AG04450 (cell line): ENCODE measurements at regions of chr20 and their contacts with region 1.

Region 1: DNA sequence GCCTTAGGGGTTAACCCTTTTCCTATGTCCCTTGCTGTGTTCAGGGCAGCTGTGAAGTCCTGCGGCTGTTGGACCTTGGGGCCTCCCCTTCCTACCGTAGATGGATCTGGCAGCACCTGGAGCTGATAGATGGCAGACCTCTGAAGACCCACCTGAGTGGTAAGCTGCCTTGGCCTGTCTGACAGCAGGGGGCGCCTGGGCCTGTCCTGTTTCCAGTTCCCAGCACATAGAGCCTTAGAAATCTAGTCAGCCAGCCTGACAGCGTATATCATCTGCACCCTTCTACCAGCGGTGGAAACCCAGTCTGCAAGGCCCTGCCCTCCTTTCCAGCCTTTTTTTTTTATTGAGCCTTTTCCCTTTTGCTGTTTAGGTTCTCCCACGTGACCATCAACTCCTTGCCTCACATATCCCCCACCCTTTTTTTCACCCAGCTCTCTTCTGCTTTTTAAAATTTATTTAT is 26.6 kb downstream of the CNBD2 start:
- DNase-seq: peak; percentile 57
- H3K4me3 ChIP-seq: no peak overlapping the region
- H3K27ac ChIP-seq: no peak overlapping the region
- H3K27me3 ChIP-seq: no peaks in the 10 kb centered on the region
- CTCF ChIP-seq: peak; percentile 99

Region 2: DNA sequence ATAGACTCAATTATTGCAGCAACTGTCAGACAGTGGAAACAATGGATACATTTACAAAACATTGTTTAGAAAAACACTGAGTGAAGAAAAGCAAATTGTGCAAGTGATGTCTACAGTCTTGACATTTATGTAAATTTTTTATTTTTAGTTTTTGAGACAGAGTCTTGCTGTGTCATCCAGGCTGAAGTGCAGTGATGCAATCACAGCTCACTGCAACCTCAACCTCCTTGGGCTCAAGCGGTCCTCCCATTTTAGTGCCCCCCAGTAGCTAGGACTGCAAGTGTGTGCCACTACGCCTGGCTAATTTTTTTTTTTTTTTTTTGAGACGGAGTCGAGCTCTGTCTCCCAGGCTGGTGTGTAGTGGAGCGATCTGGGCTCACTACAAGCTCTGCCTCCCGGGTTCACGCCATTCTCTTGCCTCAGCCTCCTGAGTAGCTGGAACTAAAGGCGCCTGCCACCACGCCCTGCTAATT is 16.9 kb before region 1 on chr20:
- CTCF ChIA-PET with region 1: interaction called, 112 read pairs
- POLR2A ChIA-PET with region 1: no interaction called
- DNase-seq: no peak
- H3K4me3 ChIP-seq: no peak overlapping the region
- H3K27ac ChIP-seq: no peak overlapping the region
- H3K27me3 ChIP-seq: peaks cover 15% of the 10 kb centered on the region
- CTCF ChIP-seq: no peak

Region 3: DNA sequence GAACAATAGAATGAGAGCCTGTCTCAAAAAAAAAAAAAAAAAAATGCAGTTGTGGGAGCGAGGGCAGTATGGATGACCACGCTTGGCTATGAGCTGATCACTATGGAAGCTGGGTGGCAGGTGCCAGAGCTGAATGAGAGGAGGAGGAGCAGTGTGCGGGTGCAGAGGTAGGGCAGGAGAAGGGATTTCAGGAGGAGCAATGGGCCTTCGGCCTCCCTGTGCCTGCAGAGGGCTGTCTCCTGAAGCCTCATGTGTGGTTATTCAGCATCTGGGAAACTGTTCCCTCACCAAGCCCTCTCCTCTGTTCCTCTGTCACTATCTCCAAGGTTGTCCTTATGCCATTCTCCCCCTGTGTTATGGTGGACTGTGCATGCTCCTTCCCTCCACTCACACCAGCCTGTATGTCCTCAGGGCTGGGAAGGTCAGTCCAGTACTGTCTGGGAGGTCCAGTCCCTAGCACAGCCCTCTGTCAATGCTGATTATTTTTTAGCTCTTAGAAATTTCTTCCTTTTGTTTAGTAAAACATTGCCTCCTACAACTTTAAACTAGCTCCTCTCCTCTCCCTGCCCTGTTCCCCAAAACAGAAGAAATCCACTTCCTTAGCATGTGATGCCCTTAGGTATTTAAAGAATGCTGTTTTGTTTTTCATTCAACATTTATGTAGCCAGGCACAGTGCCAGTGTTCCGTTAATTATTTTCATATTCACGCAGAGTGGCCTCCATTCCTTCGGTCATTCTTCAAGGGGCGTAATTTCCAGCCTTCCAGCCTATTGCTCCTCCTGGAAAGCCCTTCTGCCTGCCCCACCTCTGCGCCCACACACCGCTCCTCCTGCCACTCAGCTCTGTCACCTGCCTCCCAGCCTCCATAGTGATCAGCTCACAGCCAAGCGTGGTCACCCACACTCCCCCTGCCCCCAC is 22.3 kb after region 1 on chr20:
- CTCF ChIA-PET with region 1: interaction called, 15 read pairs
- POLR2A ChIA-PET with region 1: no interaction called
- DNase-seq: peak; percentile 27
- H3K4me3 ChIP-seq: no peak overlapping the region
- H3K27ac ChIP-seq: peak overlapping the region; percentile 57
- H3K27me3 ChIP-seq: no peaks in the 10 kb centered on the region
- CTCF ChIP-seq: no peak

Region 4: DNA sequence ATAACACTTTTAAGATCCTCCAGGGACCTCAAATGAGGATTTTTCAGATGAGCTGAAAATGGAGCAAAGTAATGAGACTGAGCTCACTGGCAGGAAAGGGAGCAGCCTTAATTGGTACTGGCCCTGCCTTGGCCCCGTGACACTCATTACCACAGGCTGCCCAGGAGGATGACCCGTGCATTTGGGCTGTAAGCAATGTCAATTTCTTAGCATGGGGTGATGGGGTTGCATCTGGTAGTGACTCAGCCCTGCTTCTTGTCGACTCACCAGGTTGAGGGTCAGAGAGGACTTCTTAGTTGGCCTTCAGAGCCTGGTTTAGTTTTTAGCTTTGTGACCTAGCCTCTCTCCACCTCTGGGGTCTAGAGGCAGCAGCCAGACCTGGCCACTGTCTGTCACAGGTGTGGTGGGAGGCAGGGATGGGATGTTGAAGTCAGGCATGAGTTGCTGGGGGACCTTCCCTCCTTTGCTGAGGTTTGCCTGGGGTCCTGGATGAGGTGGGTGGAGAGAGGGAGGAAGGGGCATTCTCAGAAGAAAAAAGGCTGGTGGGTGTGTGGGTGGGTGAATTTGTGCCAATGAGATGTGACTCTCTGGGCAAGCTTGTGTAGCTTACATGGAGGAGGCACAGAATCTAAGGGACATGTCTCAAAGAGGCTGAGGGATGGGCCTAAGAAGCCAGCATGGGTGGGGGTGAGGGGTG is 133.6 kb after region 1 on chr20:
- CTCF ChIA-PET with region 1: interaction called, 583 read pairs
- POLR2A ChIA-PET with region 1: no interaction called
- DNase-seq: peak; percentile 36
- H3K4me3 ChIP-seq: no peak overlapping the region
- H3K27ac ChIP-seq: peak overlapping the region; percentile 39
- H3K27me3 ChIP-seq: no peaks in the 10 kb centered on the region
- CTCF ChIP-seq: no peak

Region 5: GRCh38 chr20:36199345-36200257 is 204.6 kb after region 1 on chr20:
- CTCF ChIA-PET with region 1: interaction called, 66 read pairs
- POLR2A ChIA-PET with region 1: no interaction called
- DNase-seq: peak; percentile 56
- H3K4me3 ChIP-seq: no peak overlapping the region
- H3K27ac ChIP-seq: no peak overlapping the region
- H3K27me3 ChIP-seq: no peaks in the 10 kb centered on the region
- CTCF ChIP-seq: peak; percentile 94